Right ventricle myocardium inferior (tissue), 1 donor: ENCODE measurements at regions of chr1 and their contacts with region 1.

Region 1: DNA sequence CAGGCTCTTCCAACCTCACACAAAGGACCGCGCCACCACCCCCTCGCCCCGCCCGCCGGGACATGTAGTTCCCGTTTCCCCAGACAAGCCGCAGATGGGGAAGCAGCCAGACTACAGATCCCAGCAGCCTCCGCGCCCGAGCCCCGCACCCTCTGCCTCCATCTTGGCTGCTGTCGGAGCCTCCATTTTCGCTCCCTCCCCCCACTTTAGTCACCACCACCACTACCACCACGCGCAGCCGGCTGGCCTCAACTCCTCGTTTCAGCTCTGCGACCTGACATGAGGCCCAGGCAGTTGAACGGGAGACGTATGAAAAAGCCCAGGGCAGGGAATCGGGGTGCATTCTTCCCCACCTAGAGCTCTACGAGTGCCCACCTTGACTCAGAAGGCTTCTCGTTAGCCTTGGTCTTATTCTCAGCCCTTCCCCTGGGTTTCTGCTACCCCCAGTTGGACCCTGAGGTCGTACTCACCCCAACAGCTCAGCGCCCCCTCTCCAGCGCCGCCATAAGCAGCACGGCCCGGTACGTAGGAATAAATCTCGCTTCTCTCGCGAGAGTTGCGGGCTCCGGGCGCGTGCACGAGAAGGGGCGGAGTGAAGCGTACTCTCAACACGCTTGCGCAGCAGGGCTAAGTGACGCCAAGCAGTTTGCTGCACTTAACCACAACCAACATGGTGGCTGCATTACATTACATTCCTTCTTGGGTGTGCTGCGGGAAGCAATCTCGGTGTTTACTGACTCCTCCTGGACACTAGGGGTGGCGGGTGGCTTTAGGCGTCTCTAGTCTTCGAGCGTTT is at the start of gene CSDE1:
- DNase-seq: peak; percentile 98
- ATAC-seq: peak; percentile 97
- total RNA-seq, gene CSDE1: 873 TPM

Region 2: GRCh38 chr1:114581335-114582287 is 176.0 kb before region 1 on chr1 and contains the start of gene BCAS2:
- intact Hi-C with region 1: loop called (anchors 2 kb)
- DNase-seq: peak; percentile 97
- ATAC-seq: peak; percentile 99
- total RNA-seq, gene BCAS2: 28.4 TPM

Region 3: DNA sequence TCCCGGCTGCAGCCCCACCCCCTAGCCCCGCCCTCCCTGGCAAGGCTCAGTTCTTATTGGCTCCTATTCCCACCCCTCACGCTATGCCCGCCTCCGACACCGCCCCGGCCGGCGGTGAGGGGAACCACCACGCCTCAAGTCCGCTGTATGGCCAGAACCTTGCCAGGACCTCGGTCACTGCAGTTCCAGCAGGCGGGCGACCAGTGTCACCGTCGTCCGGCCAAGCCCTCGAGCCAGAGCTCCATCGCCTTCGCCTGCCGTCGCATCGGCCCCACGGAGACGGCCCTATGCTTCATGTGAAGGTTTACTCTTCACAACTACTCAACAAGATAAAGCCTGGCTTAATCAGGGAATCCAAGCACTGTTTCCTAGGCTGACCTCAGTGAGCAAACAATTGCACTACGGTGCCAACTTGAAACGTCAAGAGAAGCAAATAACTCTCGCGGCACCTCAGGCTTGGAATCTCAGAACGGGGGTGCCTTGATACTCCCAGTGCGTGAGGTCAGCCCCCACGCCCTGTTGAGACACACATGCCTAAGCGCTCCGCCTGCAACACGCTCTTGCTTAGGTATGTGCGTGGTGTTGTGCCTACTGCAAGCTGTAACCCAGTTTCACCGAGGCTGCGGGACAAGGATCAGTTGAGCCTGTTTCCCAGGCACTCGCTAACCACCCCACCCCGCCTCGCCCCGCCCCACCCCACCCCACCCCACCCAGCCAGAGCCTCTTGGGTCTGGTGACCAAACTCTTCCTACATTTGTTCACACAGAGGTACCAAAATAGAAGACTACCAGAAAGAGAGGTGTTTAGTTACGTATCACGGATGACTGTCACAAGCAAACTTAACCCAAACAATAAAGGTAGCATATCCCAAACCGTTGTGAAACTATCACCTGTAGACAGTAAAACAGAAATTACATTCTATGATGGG is 87.3 kb before region 1 on chr1:
- intact Hi-C with region 1: loop called (anchors 2 kb)
- DNase-seq: peak; percentile 95
- ATAC-seq: peak; percentile 100

Region 4: DNA sequence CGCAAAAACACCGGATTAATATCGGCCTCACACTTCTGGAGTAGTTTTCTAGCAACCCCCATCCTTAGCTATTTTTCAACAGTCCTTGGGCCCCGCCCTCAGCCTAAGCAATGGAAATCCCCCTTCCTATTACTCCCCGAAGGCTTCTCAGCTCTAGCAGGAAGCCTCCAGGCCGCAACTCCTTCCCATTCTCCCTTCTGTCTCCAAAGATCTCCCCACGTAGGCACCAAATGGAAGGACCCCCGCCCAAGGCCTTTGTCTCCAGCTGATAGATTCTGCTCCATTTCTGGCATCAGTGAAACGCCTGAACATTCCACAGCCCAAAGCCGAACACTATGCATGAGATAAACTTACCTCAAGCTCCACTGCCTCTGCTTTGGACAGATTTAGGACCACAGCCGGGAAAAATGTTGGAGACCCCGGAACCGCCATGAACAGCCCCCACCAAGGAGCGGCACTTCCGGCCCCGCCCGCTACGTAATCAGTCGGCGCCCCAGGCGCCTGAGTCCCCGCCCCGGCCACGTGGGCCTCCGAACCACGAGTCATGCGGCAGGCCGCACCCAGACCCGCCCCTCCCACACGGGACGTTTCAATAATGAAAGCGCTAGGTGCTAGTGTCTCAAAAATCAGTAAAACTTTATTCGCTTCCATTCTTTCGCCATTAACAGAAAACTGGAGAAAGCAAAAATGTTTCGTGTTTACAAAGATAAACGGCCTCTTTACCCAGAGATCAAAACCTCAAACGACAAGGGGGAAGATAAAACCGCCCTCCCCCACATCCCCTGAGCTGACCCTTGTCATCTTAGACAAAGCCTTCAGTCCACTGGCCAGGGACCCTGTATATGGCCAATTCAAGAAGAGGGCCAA is 41.1 kb before region 1 on chr1 and contains the start of gene NRAS:
- intact Hi-C with region 1: loop called (anchors 5 kb)
- DNase-seq: peak; percentile 97
- ATAC-seq: peak; percentile 99
- total RNA-seq, gene NRAS: 7.2 TPM

Region 5: DNA sequence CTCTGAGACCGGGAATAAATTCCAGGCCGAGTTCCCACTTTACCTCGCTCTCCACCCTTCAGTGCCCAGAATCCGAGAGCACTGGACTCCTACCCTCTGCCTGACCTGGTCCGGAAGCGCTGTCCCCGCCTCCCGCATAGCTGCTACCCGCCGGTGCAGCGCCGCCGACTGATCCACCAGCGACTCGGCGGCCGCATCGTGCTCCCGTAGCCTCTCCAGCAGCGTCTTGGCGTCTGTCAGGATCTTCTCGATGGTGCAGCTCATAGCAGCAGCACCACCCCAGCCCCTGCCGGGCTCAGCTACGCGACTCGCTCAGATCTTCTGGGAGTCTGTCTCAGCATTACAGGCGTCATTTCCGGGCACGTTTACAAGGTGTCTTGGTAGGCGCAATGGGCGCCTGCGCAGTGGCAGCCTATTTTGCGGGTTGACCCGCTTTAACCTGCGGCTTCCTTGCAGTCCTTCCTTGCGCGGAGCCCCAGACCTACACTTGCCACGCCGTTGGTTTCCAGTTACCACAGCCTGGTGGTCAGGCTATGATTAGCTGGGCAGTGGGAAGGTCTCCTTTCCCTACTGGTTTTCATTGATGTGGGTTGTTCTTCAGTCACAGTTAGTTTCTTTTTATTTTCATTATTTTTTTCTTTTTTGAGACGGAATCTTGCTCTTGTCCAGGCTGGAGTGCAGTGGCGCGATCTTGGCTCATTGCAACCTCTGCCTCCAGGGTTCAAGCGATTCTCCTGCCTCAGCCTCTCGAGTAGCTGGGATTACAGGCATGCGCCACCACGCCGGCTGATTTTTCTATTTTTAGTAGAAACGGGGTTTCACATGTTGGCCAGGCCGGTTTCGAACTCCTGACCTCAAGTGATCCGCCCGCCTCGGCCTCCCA is 22.9 kb after region 1 on chr1 and contains the start of gene SIKE1:
- intact Hi-C with region 1: loop called (anchors 2 kb)
- DNase-seq: peak; percentile 96
- ATAC-seq: peak; percentile 98
- total RNA-seq, gene SIKE1: 34.2 TPM

Region 6: DNA sequence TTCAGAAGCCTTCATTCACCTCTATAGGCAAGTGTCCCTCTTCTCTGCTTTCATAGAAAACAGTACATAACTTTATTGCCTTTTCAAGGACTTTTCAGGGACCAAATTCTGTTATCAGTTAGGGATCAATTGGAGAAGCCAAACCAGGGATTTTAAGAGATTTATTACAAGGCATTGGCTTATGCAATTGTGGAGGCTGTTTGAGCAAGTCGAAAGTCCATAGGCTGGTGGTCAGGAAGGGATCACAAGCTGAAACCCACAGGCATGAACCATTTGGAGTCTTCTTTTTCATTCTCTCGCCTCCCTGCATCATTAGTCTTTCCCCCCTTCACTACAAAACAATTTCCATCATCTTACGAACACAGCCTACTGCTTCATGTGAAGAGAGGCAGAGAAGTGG is 62.2 kb after region 1 on chr1:
- intact Hi-C with region 1: no loop called
- DNase-seq: no peak
- ATAC-seq: no peak